GM12878 (cell line): ENCODE measurements at regions of chr4 and their contacts with region 1.

Region 1: DNA sequence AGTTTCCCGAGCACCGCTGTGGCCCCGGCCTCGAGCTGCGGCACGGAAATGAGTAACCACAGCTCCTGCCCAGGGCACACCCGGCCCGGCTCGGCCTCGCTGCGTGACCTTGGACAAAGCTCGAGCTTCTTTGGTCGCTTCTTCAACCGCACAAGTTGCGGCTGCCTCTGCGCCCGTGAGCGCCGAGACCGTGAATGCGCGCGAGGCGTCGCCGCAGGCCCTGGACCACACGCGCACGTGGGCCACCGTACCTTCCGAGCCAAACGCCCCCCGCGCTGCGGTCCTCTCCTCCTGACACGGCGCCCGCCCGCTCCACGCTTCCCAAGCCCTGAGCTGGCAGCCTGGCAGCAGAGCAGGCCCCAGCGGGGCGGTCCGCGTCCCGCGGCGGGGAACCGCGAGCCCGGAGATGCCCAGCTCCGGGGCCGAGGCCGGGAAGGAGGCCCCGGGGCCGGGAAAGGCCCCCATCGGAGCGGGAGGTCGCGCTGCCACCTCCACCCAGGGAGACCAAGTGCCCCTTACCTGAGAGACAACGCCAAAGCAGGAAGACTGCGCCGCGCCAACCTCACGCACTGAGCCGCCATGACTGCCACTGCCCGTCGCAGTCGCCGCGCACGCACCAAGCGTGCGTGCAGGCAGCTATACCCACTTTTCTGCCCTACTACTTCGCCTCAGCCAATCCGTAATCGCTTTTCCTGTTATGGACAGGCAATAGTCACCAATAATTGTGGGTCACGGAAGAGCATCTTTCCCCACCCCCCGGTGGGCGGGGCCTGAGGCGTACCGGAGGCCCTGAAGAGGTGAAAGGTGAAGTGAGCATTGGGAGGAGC is at the start of gene GRPEL1:
- DNase-seq: peak; percentile 98
- ATAC-seq: peak; percentile 95
- H3K4me3 ChIP-seq: peak within 1 kb of the TSS; percentile 74
- H3K27ac ChIP-seq: peak within 1 kb of the TSS; percentile 84
- H3K4me1 ChIP-seq: peaks cover 14% of the 10 kb centered on the region
- H3K27me3 ChIP-seq: no peaks in the 10 kb centered on the region; a peak in 1 of 4 replicates
- CTCF ChIP-seq: peak; percentile 5 to 13 (median 7); a peak in 1 of 6 replicates
- EP300 ChIP-seq: no peak
- POLR2A ChIP-seq: peak; percentile 99
- RAD21 ChIP-seq: no peak
- polyA plus RNA-seq, gene GRPEL1: 103 to 119 TPM

Region 2: GRCh38 chr4:6716018-6716911 is 351.4 kb before region 1 on chr4 and contains the start of gene BLOC1S4:
- CTCF ChIA-PET with region 1: interaction called, 81 read pairs
- POLR2A ChIA-PET with region 1: interaction called, 9 read pairs
- RAD21 ChIA-PET with region 1: interaction called, 26 read pairs
- SMC1A ChIA-PET with region 1: interaction called, 8 read pairs
- in situ Hi-C with region 1: loop called (anchors 5 kb)
- intact Hi-C with region 1: loop called (anchors 1 kb)
- DNase-seq: peak; percentile 86
- ATAC-seq: peak; percentile 81
- H3K4me3 ChIP-seq: peak within 1 kb of the TSS; percentile 92
- H3K27ac ChIP-seq: peak within 1 kb of the TSS; percentile 81
- H3K4me1 ChIP-seq: peaks cover 7% of the 10 kb centered on the region
- H3K27me3 ChIP-seq: no peaks in the 10 kb centered on the region
- CTCF ChIP-seq: no peak
- EP300 ChIP-seq: no peak
- POLR2A ChIP-seq: peak; percentile 97
- RAD21 ChIP-seq: no peak
- polyA plus RNA-seq, gene BLOC1S4: 2.7 to 6.3 TPM

Region 3: GRCh38 chr4:6892190-6892908 is 175.3 kb before region 1 on chr4:
- CTCF ChIA-PET with region 1: interaction called, 6 read pairs
- POLR2A ChIA-PET with region 1: interaction called, 3 read pairs
- RAD21 ChIA-PET with region 1: no interaction called
- SMC1A ChIA-PET with region 1: interaction called, 3 read pairs
- in situ Hi-C with region 1: no loop called
- intact Hi-C with region 1: loop called (anchors 5 kb)
- DNase-seq: no peak
- ATAC-seq: peak; percentile 58
- H3K4me3 ChIP-seq: no peak overlapping the region
- H3K27ac ChIP-seq: no peak overlapping the region
- H3K4me1 ChIP-seq: peaks cover 11% of the 10 kb centered on the region
- H3K27me3 ChIP-seq: no peaks in the 10 kb centered on the region
- CTCF ChIP-seq: peak; percentile 1 to 22 (median 18); a peak in 2 of 6 replicates
- EP300 ChIP-seq: no peak
- POLR2A ChIP-seq: no peak
- RAD21 ChIP-seq: peak; percentile 8; the same call in 1 of the 2 replicates

Region 4: GRCh38 chr4:6963139-6963611 is 104.5 kb before region 1 on chr4:
- CTCF ChIA-PET with region 1: interaction called, 13 read pairs
- POLR2A ChIA-PET with region 1: interaction called, 4 read pairs
- RAD21 ChIA-PET with region 1: no interaction called
- SMC1A ChIA-PET with region 1: interaction called, 3 read pairs
- in situ Hi-C with region 1: no loop called
- intact Hi-C with region 1: no loop called
- DNase-seq: no peak
- ATAC-seq: peak; percentile 5; the same call in 2 of the 3 replicates
- H3K4me3 ChIP-seq: peak overlapping the region; percentile 71; the same call in 1 of the 2 replicates
- H3K27ac ChIP-seq: peak overlapping the region; percentile 95
- H3K4me1 ChIP-seq: peaks cover 28% of the 10 kb centered on the region
- H3K27me3 ChIP-seq: no peaks in the 10 kb centered on the region
- CTCF ChIP-seq: no peak
- EP300 ChIP-seq: no peak
- POLR2A ChIP-seq: no peak
- RAD21 ChIP-seq: no peak

Region 5: GRCh38 chr4:6986781-6987587 is 80.7 kb before region 1 on chr4:
- CTCF ChIA-PET with region 1: interaction called, 24 read pairs
- POLR2A ChIA-PET with region 1: interaction called, 8 read pairs
- RAD21 ChIA-PET with region 1: interaction called, 6 read pairs
- SMC1A ChIA-PET with region 1: interaction called, 5 read pairs
- in situ Hi-C with region 1: no loop called
- intact Hi-C with region 1: loop called (anchors 5 kb)
- DNase-seq: peak; percentile 60
- ATAC-seq: peak; percentile 90
- H3K4me3 ChIP-seq: peak overlapping the region; percentile 85
- H3K27ac ChIP-seq: peak overlapping the region; percentile 83
- H3K4me1 ChIP-seq: peaks cover 19% of the 10 kb centered on the region
- H3K27me3 ChIP-seq: no peaks in the 10 kb centered on the region
- CTCF ChIP-seq: peak in 1 of 3 experiments; percentile 5; a peak in 2 of 6 replicates
- EP300 ChIP-seq: no peak
- POLR2A ChIP-seq: peak; percentile 84
- RAD21 ChIP-seq: peak; percentile 13; the same call in 1 of the 2 replicates

Region 6: GRCh38 chr4:7042697-7043464 is 24.8 kb before region 1 on chr4 and contains the start of gene TADA2B:
- CTCF ChIA-PET with region 1: interaction called, 210 read pairs
- POLR2A ChIA-PET with region 1: interaction called, 88 read pairs
- RAD21 ChIA-PET with region 1: interaction called, 87 read pairs
- SMC1A ChIA-PET with region 1: interaction called, 79 read pairs
- in situ Hi-C with region 1: no loop called
- intact Hi-C with region 1: loop called (anchors 1 kb)
- DNase-seq: peak; percentile 63
- ATAC-seq: peak; percentile 86
- H3K4me3 ChIP-seq: peak within 1 kb of the TSS; percentile 83
- H3K27ac ChIP-seq: peak within 1 kb of the TSS; percentile 87
- H3K4me1 ChIP-seq: peaks cover 27% of the 10 kb centered on the region
- H3K27me3 ChIP-seq: peaks cover 0 to 2% of the 10 kb centered on the region in 2 experiments; a peak in 1 of 4 replicates
- CTCF ChIP-seq: peak; percentile 18 to 61 (median 30); a peak in 4 of 6 replicates
- EP300 ChIP-seq: no peak
- POLR2A ChIP-seq: no peak
- RAD21 ChIP-seq: no peak
- polyA plus RNA-seq, gene TADA2B: 0.66 to 1.2 TPM

Region 7: DNA sequence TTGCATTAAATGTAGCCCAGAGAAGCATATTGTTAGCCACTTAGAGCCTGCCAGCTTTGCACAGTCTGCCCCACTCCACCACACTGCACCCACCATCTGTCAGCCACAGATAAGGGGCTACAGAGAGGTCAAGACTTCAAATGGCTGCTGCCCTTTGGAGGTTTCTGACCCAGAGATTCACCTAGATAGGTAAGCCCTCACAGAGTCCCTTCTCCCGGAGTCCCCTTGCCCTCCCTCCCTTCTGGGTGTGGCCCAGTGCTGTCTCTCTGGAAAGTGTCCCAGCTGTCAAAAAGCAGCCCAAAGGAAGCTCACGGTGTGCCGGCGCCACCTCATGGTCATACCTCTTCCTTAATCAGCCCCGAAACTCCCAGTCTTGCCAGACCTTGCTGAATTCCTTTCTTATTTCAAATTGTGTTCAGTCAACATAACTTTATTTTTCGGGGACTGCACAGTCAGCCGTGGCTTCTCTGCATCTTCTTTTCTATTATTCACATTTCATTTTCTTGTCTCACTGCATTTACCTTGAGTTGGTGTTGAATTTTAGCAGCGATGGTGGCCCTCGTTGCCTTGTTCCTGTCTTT is 14.3 kb after region 1 on chr4:
- CTCF ChIA-PET with region 1: interaction called, 15 read pairs
- POLR2A ChIA-PET with region 1: interaction called, 3 read pairs
- RAD21 ChIA-PET with region 1: interaction called, 5 read pairs
- SMC1A ChIA-PET with region 1: interaction called, 5 read pairs
- in situ Hi-C with region 1: no loop called
- intact Hi-C with region 1: no loop called
- DNase-seq: no peak
- ATAC-seq: peak; percentile 90
- H3K4me3 ChIP-seq: no peak overlapping the region
- H3K27ac ChIP-seq: no peak overlapping the region
- H3K4me1 ChIP-seq: no peaks in the 10 kb centered on the region
- H3K27me3 ChIP-seq: no peaks in the 10 kb centered on the region
- CTCF ChIP-seq: peak; percentile 58 to 69 (median 61)
- EP300 ChIP-seq: no peak
- POLR2A ChIP-seq: no peak
- RAD21 ChIP-seq: peak; percentile 58